ENCODE measurements at regions of chr7 and their contacts with region 1.

Region 1: GRCh38 chr7:10939911-10940703 is 33.6 kb upstream of the PHF14 start:
- DNase-seq: peak; percentile 83
- H3K4me3 Mint-ChIP-seq: no peak overlapping the region
- H3K27ac Mint-ChIP-seq: no peak overlapping the region
- H3K4me1 Mint-ChIP-seq: peaks cover 33% of the 10 kb centered on the region
- H3K27me3 Mint-ChIP-seq: no peaks in the 10 kb centered on the region

Region 2: GRCh38 chr7:10815546-10815945 is 124.6 kb before region 1 on chr7:
- intact Hi-C with region 1: no loop called
- DNase-seq: no peak
- H3K4me3 Mint-ChIP-seq: no peak overlapping the region
- H3K27ac Mint-ChIP-seq: no peak overlapping the region
- H3K4me1 Mint-ChIP-seq: no peaks in the 10 kb centered on the region
- H3K27me3 Mint-ChIP-seq: no peaks in the 10 kb centered on the region

Region 3: GRCh38 chr7:10973061-10973944 is 33.2 kb after region 1 on chr7 and contains the start of gene PHF14:
- intact Hi-C with region 1: loop called (anchors 1 kb)
- DNase-seq: peak; percentile 94
- H3K4me3 Mint-ChIP-seq: peak within 1 kb of the TSS; percentile 97
- H3K27ac Mint-ChIP-seq: peak within 1 kb of the TSS; percentile 90
- H3K4me1 Mint-ChIP-seq: peaks cover 39% of the 10 kb centered on the region
- H3K27me3 Mint-ChIP-seq: peaks cover 10% of the 10 kb centered on the region
- total RNA-seq, gene PHF14: 42.9 and 43.8 TPM in 2 replicates

Region 4: DNA sequence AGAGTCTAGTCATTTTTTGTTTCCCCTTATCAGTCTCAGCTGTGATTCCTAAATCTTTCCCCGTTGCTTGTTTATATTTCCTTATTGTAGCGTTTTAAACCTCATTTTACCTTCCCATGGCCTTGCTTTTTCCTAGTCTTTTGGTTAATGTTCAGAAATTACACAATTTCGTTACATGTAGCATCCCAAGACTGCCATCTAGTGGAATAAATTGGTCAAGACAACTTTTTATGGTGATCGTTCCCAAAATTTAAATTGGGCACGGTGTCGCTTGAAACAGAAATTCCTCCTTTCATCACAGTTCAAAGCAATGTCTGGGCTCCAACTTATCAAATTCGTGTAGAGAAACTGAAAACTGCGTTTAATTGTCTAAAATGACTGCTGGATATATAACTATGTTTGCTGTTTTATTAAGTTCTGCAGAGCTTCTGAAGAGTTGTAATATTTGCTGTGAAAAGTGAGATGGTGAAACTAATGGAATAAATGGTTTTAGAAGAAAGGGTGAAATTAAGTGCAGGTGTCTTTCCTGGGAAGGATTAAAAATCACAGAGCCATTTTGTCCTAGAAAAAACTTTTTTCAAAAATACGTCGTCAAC is 403.8 kb after region 1 on chr7:
- intact Hi-C with region 1: loop called (anchors 10 kb)
- DNase-seq: no peak
- H3K4me3 Mint-ChIP-seq: no peak overlapping the region
- H3K27ac Mint-ChIP-seq: no peak overlapping the region
- H3K4me1 Mint-ChIP-seq: no peaks in the 10 kb centered on the region
- H3K27me3 Mint-ChIP-seq: peaks cover 2% of the 10 kb centered on the region

Measured in activated T-helper 1 cell treated with anti-CD3 and anti-CD28 coated beads, Interleukin-12 subunit alpha, Interleukin-12 subunit beta, Interleukin-2, Interleukin-4 antibody, amounts not matched to agents 30 ng/mL and 10 ng/mL and 1 ng/mL, durations not matched to agents 14 hours and 24 hours and 36 hours (primary cell).